Activated CD8-positive, alpha-beta T cell treated with anti-CD3 and anti-CD28 coated beads, Interleukin-2, amount 10 ng/mL, durations not matched to agents 7 days and 5 days (primary cell): ENCODE measurements at regions of chr16 and their contacts with region 1.

Region 1: GRCh38 chr16:2777231-2777902 is at the start of gene ELOB:
- DNase-seq: peak; percentile 91
- ATAC-seq: peak; percentile 92
- H3K4me3 Mint-ChIP-seq: peak within 1 kb of the TSS; percentile 96
- H3K27ac Mint-ChIP-seq: peak within 1 kb of the TSS; percentile 97
- H3K4me1 Mint-ChIP-seq: peaks cover 38% of the 10 kb centered on the region
- H3K27me3 Mint-ChIP-seq: no peaks in the 10 kb centered on the region
- total RNA-seq, gene ELOB: 163 to 182 TPM

Region 2: DNA sequence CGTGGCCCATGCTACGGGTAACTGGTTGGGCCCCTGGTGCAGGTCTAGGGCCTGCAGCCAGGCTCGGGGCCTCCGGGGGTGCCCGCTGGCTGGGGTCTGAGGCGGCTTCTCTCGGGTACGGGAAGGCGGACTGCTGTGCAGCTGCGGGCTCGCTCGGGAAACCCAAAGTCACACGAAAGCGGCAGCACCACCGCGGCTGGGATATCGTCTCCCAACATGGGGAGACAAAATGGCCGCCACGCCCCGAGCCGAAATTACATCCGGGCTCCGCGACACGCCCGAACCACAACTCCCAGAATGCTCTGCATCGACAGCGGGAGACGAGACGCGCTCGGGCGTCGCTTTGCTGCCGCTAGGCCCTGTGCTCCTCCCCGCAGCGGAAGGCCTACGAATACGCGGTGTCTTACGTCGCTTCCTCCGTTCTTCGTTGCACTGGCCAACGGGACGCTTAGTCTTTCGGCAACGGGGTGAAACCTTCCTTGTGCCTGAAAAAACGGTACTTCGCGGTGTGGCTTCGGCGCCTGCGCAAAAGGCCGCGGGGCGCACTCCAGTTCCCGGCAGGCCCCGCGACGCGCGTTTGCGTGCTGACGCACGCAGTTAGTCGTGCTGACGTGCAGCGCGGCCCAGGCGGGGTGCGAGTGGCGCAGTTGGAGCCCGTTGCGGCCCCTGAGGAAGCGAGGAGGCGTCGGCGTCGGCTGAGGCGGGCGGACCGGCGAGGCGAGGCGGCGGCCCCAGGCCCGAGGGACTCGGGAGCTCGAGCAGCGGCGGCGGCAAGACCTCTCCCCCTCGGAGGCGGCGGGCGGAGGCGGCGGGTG is 25.1 kb before region 1 on chr16 and contains the start of gene SRRM2:
- CTCF ChIA-PET with region 1: interaction called, 4 read pairs
- POLR2A ChIA-PET with region 1: interaction called, 60 read pairs
- DNase-seq: peak; percentile 97
- ATAC-seq: peak; percentile 91
- H3K4me3 Mint-ChIP-seq: peak within 1 kb of the TSS; percentile 95
- H3K27ac Mint-ChIP-seq: peak within 1 kb of the TSS; percentile 99
- H3K4me1 Mint-ChIP-seq: peaks cover 61% of the 10 kb centered on the region
- H3K27me3 Mint-ChIP-seq: no peaks in the 10 kb centered on the region
- total RNA-seq, gene SRRM2: 501 to 511 TPM

Region 3: DNA sequence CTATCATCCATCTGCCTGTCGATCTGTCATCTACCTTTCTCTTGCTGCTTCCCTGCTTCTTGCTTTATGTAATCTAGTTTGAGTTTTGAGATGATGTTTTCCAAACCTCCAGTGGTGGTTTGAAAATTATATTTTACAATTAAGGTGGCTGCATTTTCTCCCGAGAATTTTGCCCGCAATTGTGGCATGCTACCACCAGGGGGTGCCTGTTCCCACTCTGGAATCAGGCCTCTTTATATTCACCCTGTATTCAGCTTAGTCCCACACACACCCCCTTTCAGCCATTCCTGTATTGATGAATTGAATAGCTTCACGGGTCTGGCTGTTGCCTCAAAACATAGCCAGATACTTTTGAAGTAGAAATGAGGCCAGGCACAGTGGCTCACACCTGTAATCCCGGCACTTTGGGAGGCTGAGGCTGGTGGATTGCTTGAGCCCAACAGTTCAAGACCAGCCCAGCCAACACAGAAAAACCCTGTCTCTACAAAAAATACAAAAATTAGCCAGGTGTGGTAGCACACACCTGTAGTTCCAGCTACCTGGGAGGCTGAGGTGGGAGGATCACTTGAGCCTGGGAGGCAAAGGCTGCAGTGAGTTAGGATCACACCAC is 77.4 kb after region 1 on chr16:
- CTCF ChIA-PET with region 1: no interaction called
- POLR2A ChIA-PET with region 1: no interaction called
- DNase-seq: no peak
- ATAC-seq: no peak
- H3K4me3 Mint-ChIP-seq: no peak overlapping the region
- H3K27ac Mint-ChIP-seq: no peak overlapping the region
- H3K4me1 Mint-ChIP-seq: peaks cover 9% of the 10 kb centered on the region
- H3K27me3 Mint-ChIP-seq: peaks cover 3% of the 10 kb centered on the region